Activated CD4-positive, alpha-beta T cell treated with anti-CD3 and anti-CD28 coated beads, Interleukin-2, amount 10 ng/mL, durations not matched to agents 24 days and 14 days (primary cell): ENCODE measurements at regions of chr3 and their contacts with region 1.

Region 1: GRCh38 chr3:188752850-188753249 is 418.9 kb upstream of the TPRG1 start:
- DNase-seq: no peak
- H3K4me3 Mint-ChIP-seq: no peak overlapping the region
- H3K27ac Mint-ChIP-seq: peak overlapping the region; percentile 2
- H3K4me1 Mint-ChIP-seq: peaks cover 21% of the 10 kb centered on the region
- H3K27me3 Mint-ChIP-seq: peaks cover 2% of the 10 kb centered on the region

Region 2: DNA sequence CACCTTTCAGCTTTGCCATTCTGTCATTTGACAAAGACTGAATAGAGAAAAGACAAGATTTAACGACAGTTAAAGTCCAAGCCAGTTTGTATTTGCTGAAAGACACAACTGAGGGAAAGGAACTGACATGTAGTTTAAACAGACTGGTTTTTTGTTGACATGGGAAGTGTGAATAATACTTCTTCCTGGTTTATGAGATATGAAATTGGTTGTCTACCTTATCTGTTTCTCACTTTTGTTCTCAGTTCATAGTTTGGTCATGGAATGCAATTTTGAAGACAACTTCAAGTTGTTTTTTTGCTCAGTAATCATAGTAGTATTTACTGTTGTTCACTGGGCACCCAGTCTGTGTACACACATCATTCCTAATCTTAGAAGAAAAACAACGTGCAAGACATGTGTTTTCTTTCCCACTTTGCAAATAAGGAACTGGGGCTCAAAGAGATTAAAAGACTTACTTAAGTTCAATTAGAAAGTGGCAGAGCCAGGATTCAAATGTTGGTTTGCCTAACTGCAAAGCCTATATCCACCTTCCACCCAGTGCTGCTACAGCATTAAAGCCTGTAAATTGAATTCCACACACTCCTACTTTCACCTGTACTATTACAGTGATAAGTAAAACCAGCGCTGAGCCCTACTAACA is 495.3 kb before region 1 on chr3:
- intact Hi-C with region 1: loop called (anchors 2 kb)
- DNase-seq: no peak
- H3K4me3 Mint-ChIP-seq: no peak overlapping the region
- H3K27ac Mint-ChIP-seq: peak overlapping the region; percentile 85
- H3K4me1 Mint-ChIP-seq: peaks cover 47% of the 10 kb centered on the region
- H3K27me3 Mint-ChIP-seq: no peaks in the 10 kb centered on the region

Region 3: GRCh38 chr3:188309437-188310269 is 443.2 kb before region 1 on chr3:
- intact Hi-C with region 1: loop called (anchors 1 kb)
- DNase-seq: peak; percentile 79
- H3K4me3 Mint-ChIP-seq: peak overlapping the region; percentile 62
- H3K27ac Mint-ChIP-seq: peak overlapping the region; percentile 87
- H3K4me1 Mint-ChIP-seq: peaks cover 22% of the 10 kb centered on the region
- H3K27me3 Mint-ChIP-seq: peaks cover 3% of the 10 kb centered on the region

Region 4: DNA sequence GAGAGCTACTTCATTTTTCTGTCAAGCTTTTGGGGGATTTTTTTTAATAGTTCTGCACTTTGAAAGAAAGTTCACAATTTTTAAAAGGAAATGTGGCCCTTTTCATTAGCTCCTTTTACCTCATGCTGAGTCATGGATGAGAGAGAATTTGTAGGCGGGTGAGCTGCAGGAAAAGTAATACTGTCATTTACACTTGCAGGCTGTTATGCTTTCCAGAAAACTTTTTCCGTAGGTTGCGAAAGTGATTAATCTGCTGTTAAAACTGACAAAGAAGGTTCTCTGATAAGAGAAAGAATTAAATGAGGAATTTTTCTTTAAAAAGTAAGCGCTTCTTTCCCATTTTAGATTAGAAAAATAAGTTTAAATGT is 168.7 kb before region 1 on chr3:
- intact Hi-C with region 1: loop called (anchors 1 kb)
- DNase-seq: no peak
- H3K4me3 Mint-ChIP-seq: no peak overlapping the region
- H3K27ac Mint-ChIP-seq: no peak overlapping the region
- H3K4me1 Mint-ChIP-seq: peaks cover 14% of the 10 kb centered on the region
- H3K27me3 Mint-ChIP-seq: no peaks in the 10 kb centered on the region

Region 5: GRCh38 chr3:188646592-188646991 is 106.3 kb before region 1 on chr3:
- intact Hi-C with region 1: no loop called
- DNase-seq: no peak
- H3K4me3 Mint-ChIP-seq: no peak overlapping the region
- H3K27ac Mint-ChIP-seq: no peak overlapping the region
- H3K4me1 Mint-ChIP-seq: no peaks in the 10 kb centered on the region
- H3K27me3 Mint-ChIP-seq: no peaks in the 10 kb centered on the region

Region 6: GRCh38 chr3:188720636-188721035 is 32.2 kb before region 1 on chr3:
- intact Hi-C with region 1: loop called (anchors 1 kb)
- DNase-seq: no peak
- H3K4me3 Mint-ChIP-seq: no peak overlapping the region
- H3K27ac Mint-ChIP-seq: no peak overlapping the region
- H3K4me1 Mint-ChIP-seq: peaks cover 13% of the 10 kb centered on the region
- H3K27me3 Mint-ChIP-seq: peaks cover 4% of the 10 kb centered on the region

Region 7: GRCh38 chr3:189324538-189325138 is 571.8 kb after region 1 on chr3:
- intact Hi-C with region 1: loop called (anchors 10 kb)
- DNase-seq: peak; percentile 96
- H3K4me3 Mint-ChIP-seq: peak overlapping the region; percentile 84
- H3K27ac Mint-ChIP-seq: peak overlapping the region; percentile 99
- H3K4me1 Mint-ChIP-seq: peaks cover 58% of the 10 kb centered on the region
- H3K27me3 Mint-ChIP-seq: peaks cover 3% of the 10 kb centered on the region

Region 8: GRCh38 chr3:189947948-189948723 is 1195.3 kb after region 1 on chr3:
- intact Hi-C with region 1: no loop called
- DNase-seq: peak; percentile 75
- H3K4me3 Mint-ChIP-seq: peak overlapping the region; percentile 24
- H3K27ac Mint-ChIP-seq: peak overlapping the region; percentile 38
- H3K4me1 Mint-ChIP-seq: peaks cover 3% of the 10 kb centered on the region
- H3K27me3 Mint-ChIP-seq: peaks cover 5% of the 10 kb centered on the region

Region 9: DNA sequence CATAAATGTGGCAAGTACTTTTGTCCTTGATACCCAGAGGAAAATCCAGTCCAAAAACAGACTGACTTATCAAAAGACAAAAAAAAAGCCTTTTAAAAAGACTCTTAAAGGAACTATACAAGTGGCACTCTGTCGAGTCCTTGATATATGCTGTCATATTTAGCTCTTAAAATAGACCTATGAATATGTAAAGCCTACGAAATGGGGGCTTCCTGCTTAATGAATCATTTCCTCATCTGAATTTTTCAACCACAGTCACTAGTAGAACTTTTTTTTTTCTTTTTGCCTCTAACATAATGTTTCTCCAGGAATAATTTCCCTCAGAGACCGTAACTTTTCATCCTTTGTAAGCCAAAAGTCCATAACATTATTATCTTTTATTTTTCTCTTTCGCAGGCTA is 1272.1 kb after region 1 on chr3:
- intact Hi-C with region 1: no loop called
- DNase-seq: no peak
- H3K4me3 Mint-ChIP-seq: no peak overlapping the region
- H3K27ac Mint-ChIP-seq: no peak overlapping the region
- H3K4me1 Mint-ChIP-seq: no peaks in the 10 kb centered on the region
- H3K27me3 Mint-ChIP-seq: peaks cover 3% of the 10 kb centered on the region